Endothelial cell of umbilical vein (primary cell): ENCODE measurements at regions of chr13 and their contacts with region 1.

Region 1: DNA sequence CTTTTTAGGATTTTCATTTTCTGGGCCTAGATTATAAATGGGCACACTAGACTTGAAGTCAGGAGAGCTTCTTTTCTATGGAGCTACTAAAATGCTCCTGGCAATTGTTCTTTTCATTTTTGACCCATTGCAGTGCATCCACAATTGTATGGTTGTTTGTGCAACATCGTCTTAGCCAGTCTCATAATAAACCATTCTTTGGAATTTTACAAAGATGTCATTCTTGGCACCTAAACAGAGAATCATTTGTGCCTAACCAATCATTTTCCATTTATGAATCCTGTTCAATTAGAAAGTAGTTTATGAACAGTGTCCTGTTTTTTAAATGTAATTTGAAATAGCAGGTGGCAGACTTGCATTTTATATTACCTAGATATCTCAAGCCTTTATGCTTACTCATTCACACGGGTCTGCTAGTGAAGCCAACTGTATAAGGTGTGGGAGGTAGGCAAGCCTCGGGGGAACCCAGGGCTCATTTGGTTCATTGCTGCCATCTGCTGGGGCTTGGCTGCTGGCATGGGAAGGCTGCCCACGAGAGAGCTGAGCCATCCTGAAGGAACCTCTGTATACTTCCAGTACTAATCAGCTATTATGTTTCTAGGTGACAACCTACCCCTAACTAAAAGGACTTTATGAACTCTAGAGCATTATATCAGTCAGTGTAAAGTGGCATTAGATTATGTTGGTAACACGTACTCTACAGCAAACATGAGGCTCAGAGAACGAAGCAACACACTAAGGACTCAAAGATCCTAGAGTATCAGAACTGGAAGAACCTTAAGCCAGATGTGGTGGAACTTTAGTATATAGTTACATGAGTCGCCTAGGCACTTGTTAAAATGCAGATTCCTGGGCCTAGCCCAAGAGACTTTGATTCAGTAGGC is 60.0 kb downstream of the TPT1 start:
- DNase-seq: peak; percentile 79
- H3K4me3 ChIP-seq: no peak overlapping the region
- H3K27ac ChIP-seq: no peak overlapping the region
- H3K4me1 ChIP-seq: peaks cover 8% of the 10 kb centered on the region
- H3K27me3 ChIP-seq: no peaks in the 10 kb centered on the region
- CTCF ChIP-seq: peak; percentile 80 to 88
- POLR2A ChIP-seq: no peak

Region 2: DNA sequence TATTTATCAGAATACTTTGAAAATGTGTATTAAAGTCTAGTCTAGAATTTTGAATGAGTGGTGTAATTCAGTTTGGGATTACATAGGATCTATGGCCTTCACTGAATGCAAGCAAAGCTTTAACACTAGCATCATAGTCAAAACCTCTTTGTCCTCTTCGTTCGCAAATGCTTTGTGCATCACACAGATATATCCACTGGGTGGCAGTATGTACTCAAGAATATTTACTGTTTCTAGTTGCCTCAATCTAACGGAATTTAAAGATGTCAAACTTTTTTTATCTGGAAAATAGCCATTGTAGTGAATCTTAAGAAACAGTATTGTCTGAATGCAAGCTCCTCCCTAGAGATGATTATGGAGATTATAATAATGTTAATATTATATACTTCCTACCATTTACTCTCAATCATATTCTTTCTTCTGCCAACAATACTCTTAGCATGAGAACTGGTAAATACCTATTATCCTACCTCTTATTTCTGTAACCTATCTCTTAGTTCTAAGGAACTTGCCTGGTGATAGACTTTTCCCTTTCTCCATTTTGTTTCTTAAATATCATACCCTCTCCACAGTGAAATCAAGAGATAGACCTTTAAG is 1375.5 kb before region 1 on chr13:
- CTCF ChIA-PET with region 1: interaction called, 3 read pairs
- POLR2A ChIA-PET with region 1: no interaction called
- dilution Hi-C with region 1: no loop called
- intact Hi-C with region 1: loop called (anchors 10 kb)
- DNase-seq: peak; percentile 68
- H3K4me3 ChIP-seq: no peak overlapping the region
- H3K27ac ChIP-seq: no peak overlapping the region
- H3K4me1 ChIP-seq: no peaks in the 10 kb centered on the region
- H3K27me3 ChIP-seq: peaks cover 0 to 6% of the 10 kb centered on the region in 2 experiments
- CTCF ChIP-seq: peak; percentile 43 to 45
- POLR2A ChIP-seq: no peak

Region 3: GRCh38 chr13:45040622-45041021 is 240.4 kb before region 1 on chr13:
- CTCF ChIA-PET with region 1: interaction called, 287 read pairs
- POLR2A ChIA-PET with region 1: no interaction called
- dilution Hi-C with region 1: no loop called
- intact Hi-C with region 1: no loop called
- DNase-seq: no peak
- H3K4me3 ChIP-seq: no peak overlapping the region
- H3K27ac ChIP-seq: no peak overlapping the region
- H3K4me1 ChIP-seq: peaks cover 5% of the 10 kb centered on the region
- H3K27me3 ChIP-seq: no peaks in the 10 kb centered on the region
- CTCF ChIP-seq: no peak
- POLR2A ChIP-seq: no peak

Region 4: DNA sequence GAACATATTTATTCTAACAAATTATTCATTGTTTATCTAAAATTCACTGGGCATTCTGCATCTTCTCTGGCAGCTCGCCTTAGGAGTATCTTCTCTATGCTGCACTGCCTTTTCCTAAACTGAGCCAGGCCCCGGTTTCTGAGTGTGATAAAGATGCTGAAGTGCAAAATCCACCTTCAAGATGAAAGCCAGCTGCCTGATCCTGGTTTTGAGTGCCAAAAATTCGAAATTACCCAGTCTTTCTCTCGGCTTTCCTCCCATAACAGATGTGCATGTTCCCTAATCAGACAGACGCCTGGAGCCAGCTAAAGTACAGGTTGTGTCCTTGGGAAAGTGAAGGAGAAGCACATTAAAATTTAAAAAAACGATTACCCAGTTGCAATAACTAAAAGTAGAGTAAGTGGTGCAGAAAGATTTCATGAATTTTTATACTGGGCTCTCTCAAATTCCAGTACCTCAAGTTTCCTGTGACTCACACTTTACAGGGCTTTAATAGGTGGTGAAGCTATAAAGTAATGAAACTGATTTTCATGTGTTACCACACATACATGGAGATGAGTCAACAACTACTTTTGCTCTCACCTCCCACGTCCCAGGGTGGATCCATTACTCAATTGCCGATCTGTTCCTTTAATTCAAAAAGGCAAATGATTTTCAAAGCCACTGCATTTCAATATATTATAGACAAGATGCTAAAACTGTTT is 225.6 kb before region 1 on chr13:
- CTCF ChIA-PET with region 1: interaction called, 287 read pairs
- POLR2A ChIA-PET with region 1: no interaction called
- dilution Hi-C with region 1: no loop called
- intact Hi-C with region 1: no loop called
- DNase-seq: peak; percentile 14
- H3K4me3 ChIP-seq: no peak overlapping the region
- H3K27ac ChIP-seq: no peak overlapping the region
- H3K4me1 ChIP-seq: no peaks in the 10 kb centered on the region
- H3K27me3 ChIP-seq: peaks cover 4 to 5% of the 10 kb centered on the region in 2 experiments
- CTCF ChIP-seq: no peak
- POLR2A ChIP-seq: no peak

Region 5: DNA sequence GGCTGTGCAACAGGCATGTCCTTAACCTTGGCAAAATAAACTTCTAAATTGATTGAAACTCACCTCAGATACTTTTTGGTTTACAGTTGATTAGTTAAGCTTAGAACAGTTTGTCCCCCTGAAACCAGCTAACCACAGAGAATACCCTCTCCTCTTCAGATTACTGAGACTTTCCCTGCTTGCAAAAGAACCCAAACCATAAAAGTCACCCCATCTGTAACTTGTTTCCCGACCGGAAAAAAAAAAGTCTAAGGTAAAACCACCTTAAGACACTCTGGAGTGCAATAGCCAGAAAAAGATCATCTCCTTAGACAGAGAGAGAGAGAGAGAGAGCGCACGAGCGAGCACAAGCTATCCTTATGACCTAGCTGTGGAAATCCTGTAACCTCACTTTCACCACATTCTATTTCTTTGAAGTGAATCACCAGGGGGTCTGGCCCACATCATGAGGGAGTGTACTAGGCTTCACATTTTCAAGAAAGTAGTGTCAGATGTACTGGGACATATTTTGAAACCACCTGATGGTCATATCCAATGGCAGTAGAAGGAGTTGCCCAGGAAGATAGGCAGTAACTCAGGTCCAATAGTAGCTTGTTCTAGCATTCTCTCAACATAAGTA is 171.8 kb before region 1 on chr13:
- CTCF ChIA-PET with region 1: interaction called, 5 read pairs
- POLR2A ChIA-PET with region 1: no interaction called
- dilution Hi-C with region 1: no loop called
- intact Hi-C with region 1: loop called (anchors 5 kb)
- DNase-seq: no peak
- H3K4me3 ChIP-seq: no peak overlapping the region
- H3K27ac ChIP-seq: no peak overlapping the region
- H3K4me1 ChIP-seq: no peaks in the 10 kb centered on the region
- H3K27me3 ChIP-seq: peaks cover 4 to 5% of the 10 kb centered on the region in 2 experiments
- CTCF ChIP-seq: no peak
- POLR2A ChIP-seq: no peak

Region 6: GRCh38 chr13:45292176-45292575 is 11.2 kb after region 1 on chr13:
- CTCF ChIA-PET with region 1: interaction called, 18 read pairs
- POLR2A ChIA-PET with region 1: no interaction called
- dilution Hi-C with region 1: no loop called
- intact Hi-C with region 1: no loop called
- DNase-seq: no peak
- H3K4me3 ChIP-seq: no peak overlapping the region
- H3K27ac ChIP-seq: no peak overlapping the region
- H3K4me1 ChIP-seq: peaks cover 16% of the 10 kb centered on the region
- H3K27me3 ChIP-seq: no peaks in the 10 kb centered on the region
- CTCF ChIP-seq: no peak
- POLR2A ChIP-seq: no peak

Region 7: GRCh38 chr13:45310341-45311125 is 29.5 kb after region 1 on chr13:
- CTCF ChIA-PET with region 1: interaction called, 25 read pairs
- POLR2A ChIA-PET with region 1: no interaction called
- dilution Hi-C with region 1: no loop called
- intact Hi-C with region 1: loop called (anchors 2 kb)
- DNase-seq: no peak
- H3K4me3 ChIP-seq: peak overlapping the region in 1 of 3 experiments; percentile 15
- H3K27ac ChIP-seq: no peak overlapping the region
- H3K4me1 ChIP-seq: peaks cover 10% of the 10 kb centered on the region
- H3K27me3 ChIP-seq: peaks cover 0 to 2% of the 10 kb centered on the region in 2 experiments
- CTCF ChIP-seq: no peak
- POLR2A ChIP-seq: no peak